IMR-90 (cell line): ENCODE measurements at regions of chr17 and their contacts with region 1.

Region 1: DNA sequence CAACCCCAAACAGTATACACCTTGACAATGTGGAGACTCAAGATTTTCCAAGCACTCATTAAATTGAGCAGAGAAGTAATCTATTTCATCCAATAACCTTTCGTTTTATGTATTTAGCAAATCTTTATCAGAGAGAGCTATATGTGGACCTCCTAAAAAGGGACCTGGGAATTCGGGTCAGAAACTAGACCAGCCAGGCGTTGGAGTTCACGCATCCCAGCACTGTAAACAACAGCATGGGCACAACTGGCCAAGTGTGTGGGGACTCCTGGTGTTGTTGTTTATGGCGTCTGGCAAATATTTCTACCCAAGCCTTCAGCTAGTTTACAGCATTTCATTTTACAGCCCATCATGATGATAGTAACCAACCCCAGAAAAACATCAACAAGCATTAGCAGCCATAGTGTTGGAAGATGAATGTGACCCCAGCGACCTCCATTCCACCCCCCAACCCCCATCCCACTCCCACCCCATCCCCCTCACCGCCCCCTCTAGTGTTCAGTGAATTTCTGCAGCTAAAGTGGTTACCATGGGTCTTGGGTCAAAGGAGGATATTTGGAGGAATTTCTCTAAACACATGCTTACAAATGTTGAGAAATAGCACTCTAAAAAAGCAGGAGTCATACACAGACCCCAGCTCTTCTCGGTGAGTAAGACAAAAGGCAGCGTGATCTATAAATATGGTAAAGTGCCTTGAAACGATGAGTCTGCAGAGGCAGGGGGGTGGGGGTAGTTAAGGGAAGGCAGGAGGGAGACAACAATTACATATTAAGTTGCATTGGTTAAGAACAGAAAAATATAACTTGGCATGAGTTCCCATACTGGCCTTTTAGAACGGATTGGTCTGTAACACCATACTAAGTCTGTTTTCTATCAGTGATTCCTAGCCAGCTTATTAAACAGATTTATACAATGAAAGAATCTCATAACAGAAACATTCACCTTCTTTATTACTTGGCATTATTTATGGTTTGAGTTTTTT is 91.4 kb upstream of the TBX2 start:
- DNase-seq: peak; percentile 99
- ATAC-seq: peak; percentile 87
- H3K4me3 ChIP-seq: no peak overlapping the region
- H3K27ac ChIP-seq: peak overlapping the region; percentile 99
- H3K4me1 ChIP-seq: peaks cover 35% of the 10 kb centered on the region
- H3K27me3 ChIP-seq: no peaks in the 10 kb centered on the region
- CTCF ChIP-seq: peak; percentile 10; the same call in 1 of the 2 replicates
- POLR2A ChIP-seq: no peak
- RAD21 ChIP-seq: peak; percentile 31; the same call in 1 of the 2 replicates

Region 2: GRCh38 chr17:61002316-61002736 is 305.9 kb before region 1 on chr17:
- CTCF ChIA-PET with region 1: interaction called, 3 read pairs
- POLR2A ChIA-PET with region 1: no interaction called
- dilution Hi-C with region 1: no loop called
- in situ Hi-C with region 1: no loop called
- intact Hi-C with region 1: loop called (anchors 5 kb)
- DNase-seq: peak; percentile 79
- ATAC-seq: peak; percentile 75
- H3K4me3 ChIP-seq: no peak overlapping the region
- H3K27ac ChIP-seq: no peak overlapping the region
- H3K4me1 ChIP-seq: no peaks in the 10 kb centered on the region
- H3K27me3 ChIP-seq: no peaks in the 10 kb centered on the region
- CTCF ChIP-seq: peak; percentile 71
- POLR2A ChIP-seq: no peak
- RAD21 ChIP-seq: peak; percentile 84

Region 3: DNA sequence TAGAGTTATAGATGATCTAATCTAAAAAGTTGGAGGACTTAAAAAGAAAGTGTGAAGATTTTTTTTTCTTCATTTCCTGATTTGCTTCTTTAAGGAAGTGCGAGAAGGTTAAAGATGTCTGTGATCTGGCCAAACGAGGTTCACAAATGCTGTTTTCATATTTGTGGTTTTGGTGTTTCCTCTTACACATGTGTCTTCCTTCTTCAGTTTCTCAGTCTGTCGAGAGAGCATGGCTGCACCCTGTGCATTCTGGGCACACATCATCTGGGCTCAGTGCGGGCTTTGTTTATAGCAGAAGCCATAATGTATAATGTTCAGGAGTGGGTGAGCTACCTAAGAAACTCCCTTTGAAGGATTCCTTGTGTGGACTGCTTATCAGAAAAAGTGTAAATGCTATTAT is 169.0 kb before region 1 on chr17:
- CTCF ChIA-PET with region 1: no interaction called
- POLR2A ChIA-PET with region 1: no interaction called
- dilution Hi-C with region 1: no loop called
- in situ Hi-C with region 1: no loop called
- intact Hi-C with region 1: no loop called
- DNase-seq: peak; percentile 88
- ATAC-seq: peak; percentile 98
- H3K4me3 ChIP-seq: no peak overlapping the region
- H3K27ac ChIP-seq: no peak overlapping the region
- H3K4me1 ChIP-seq: no peaks in the 10 kb centered on the region
- H3K27me3 ChIP-seq: no peaks in the 10 kb centered on the region
- CTCF ChIP-seq: no peak
- POLR2A ChIP-seq: no peak
- RAD21 ChIP-seq: 0 out of 2 replicates have a peak, but pooled peaks have one; percentile 6

Region 4: DNA sequence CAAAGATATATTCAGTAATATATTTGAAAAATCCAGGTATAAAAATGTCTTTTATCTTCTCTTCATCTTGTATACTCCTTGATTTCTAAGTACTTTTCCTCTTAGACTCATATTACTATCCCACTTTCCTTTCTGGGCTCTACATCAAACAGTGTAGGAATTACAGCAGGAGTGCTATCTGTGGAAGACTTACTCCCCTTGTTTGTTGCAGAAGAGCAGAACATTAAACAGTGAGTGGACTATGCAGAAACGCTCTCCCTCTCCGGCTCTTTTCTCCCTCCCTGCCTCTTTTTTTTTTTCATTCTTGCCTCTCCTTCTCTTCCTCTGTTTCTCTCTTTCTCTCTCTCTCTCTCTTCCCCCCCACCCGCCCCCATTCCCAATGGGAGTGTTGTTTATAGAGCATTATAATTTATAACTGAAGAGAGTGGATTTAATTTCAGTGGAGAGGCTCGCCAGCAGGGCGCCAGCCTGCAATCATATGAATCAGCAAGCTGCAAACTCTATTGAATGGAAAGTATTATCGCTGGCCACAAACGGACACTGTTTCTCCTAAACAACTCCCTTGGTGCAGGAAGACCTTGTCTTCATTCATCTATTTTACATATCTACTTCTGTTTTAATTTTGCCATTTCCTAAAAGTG is 150.8 kb before region 1 on chr17:
- CTCF ChIA-PET with region 1: no interaction called
- POLR2A ChIA-PET with region 1: no interaction called
- dilution Hi-C with region 1: no loop called
- in situ Hi-C with region 1: no loop called
- intact Hi-C with region 1: loop called (anchors 5 kb)
- DNase-seq: peak; percentile 71
- ATAC-seq: peak; percentile 80
- H3K4me3 ChIP-seq: peak overlapping the region; percentile 24; the same call in 1 of the 2 replicates
- H3K27ac ChIP-seq: peak overlapping the region; percentile 91; the same call in 1 of the 2 replicates
- H3K4me1 ChIP-seq: peaks cover 9% of the 10 kb centered on the region
- H3K27me3 ChIP-seq: no peaks in the 10 kb centered on the region
- CTCF ChIP-seq: 0 out of 2 replicates have a peak, but pooled peaks have one; percentile 12
- POLR2A ChIP-seq: no peak
- RAD21 ChIP-seq: peak; percentile 36

Region 5: GRCh38 chr17:61201232-61201640 is 107.0 kb before region 1 on chr17:
- CTCF ChIA-PET with region 1: interaction called, 3 read pairs
- POLR2A ChIA-PET with region 1: interaction called, 17 read pairs
- dilution Hi-C with region 1: no loop called
- in situ Hi-C with region 1: loop called (anchors 5 kb)
- intact Hi-C with region 1: loop called (anchors 1 kb)
- DNase-seq: peak; percentile 99
- ATAC-seq: peak; percentile 84
- H3K4me3 ChIP-seq: peak overlapping the region; percentile 17; the same call in 1 of the 2 replicates
- H3K27ac ChIP-seq: peak overlapping the region; percentile 84
- H3K4me1 ChIP-seq: peaks cover 14% of the 10 kb centered on the region
- H3K27me3 ChIP-seq: no peaks in the 10 kb centered on the region
- CTCF ChIP-seq: no peak
- POLR2A ChIP-seq: no peak
- RAD21 ChIP-seq: peak; percentile 21; the same call in 1 of the 2 replicates

Region 6: GRCh38 chr17:61217878-61218837 is 90.0 kb before region 1 on chr17:
- CTCF ChIA-PET with region 1: interaction called, 4 read pairs
- POLR2A ChIA-PET with region 1: interaction called, 11 read pairs
- dilution Hi-C with region 1: no loop called
- in situ Hi-C with region 1: no loop called
- intact Hi-C with region 1: no loop called
- DNase-seq: peak; percentile 86
- ATAC-seq: peak; percentile 85
- H3K4me3 ChIP-seq: no peak overlapping the region
- H3K27ac ChIP-seq: peak overlapping the region; percentile 90
- H3K4me1 ChIP-seq: peaks cover 27% of the 10 kb centered on the region
- H3K27me3 ChIP-seq: no peaks in the 10 kb centered on the region
- CTCF ChIP-seq: no peak
- POLR2A ChIP-seq: no peak
- RAD21 ChIP-seq: no peak

Region 7: GRCh38 chr17:61251939-61252896 is 56.0 kb before region 1 on chr17:
- CTCF ChIA-PET with region 1: interaction called, 4 read pairs
- POLR2A ChIA-PET with region 1: no interaction called
- dilution Hi-C with region 1: no loop called
- in situ Hi-C with region 1: no loop called
- intact Hi-C with region 1: loop called (anchors 1 kb)
- DNase-seq: peak; percentile 99
- ATAC-seq: peak; percentile 83
- H3K4me3 ChIP-seq: no peak overlapping the region
- H3K27ac ChIP-seq: peak overlapping the region; percentile 80
- H3K4me1 ChIP-seq: peaks cover 18% of the 10 kb centered on the region
- H3K27me3 ChIP-seq: no peaks in the 10 kb centered on the region
- CTCF ChIP-seq: no peak
- POLR2A ChIP-seq: peak; percentile 52; the same call in 1 of the 2 replicates
- RAD21 ChIP-seq: peak; percentile 12; the same call in 1 of the 2 replicates